Activated CD8-positive, alpha-beta T cell treated with anti-CD3 and anti-CD28 coated beads for 36 hours (primary cell): ENCODE measurements at regions of chr9 and their contacts with region 1.

Region 1: GRCh38 chr9:4574657-4575243 is 84.5 kb downstream of the SLC1A1 start:
- DNase-seq: peak; percentile 47
- ATAC-seq: peak; percentile 67
- H3K4me3 Mint-ChIP-seq: no peak overlapping the region
- H3K27ac Mint-ChIP-seq: peak overlapping the region; percentile 33
- H3K4me1 Mint-ChIP-seq: peaks cover 22% of the 10 kb centered on the region
- H3K27me3 Mint-ChIP-seq: no peaks in the 10 kb centered on the region
- CTCF ChIP-seq: no peak

Region 2: DNA sequence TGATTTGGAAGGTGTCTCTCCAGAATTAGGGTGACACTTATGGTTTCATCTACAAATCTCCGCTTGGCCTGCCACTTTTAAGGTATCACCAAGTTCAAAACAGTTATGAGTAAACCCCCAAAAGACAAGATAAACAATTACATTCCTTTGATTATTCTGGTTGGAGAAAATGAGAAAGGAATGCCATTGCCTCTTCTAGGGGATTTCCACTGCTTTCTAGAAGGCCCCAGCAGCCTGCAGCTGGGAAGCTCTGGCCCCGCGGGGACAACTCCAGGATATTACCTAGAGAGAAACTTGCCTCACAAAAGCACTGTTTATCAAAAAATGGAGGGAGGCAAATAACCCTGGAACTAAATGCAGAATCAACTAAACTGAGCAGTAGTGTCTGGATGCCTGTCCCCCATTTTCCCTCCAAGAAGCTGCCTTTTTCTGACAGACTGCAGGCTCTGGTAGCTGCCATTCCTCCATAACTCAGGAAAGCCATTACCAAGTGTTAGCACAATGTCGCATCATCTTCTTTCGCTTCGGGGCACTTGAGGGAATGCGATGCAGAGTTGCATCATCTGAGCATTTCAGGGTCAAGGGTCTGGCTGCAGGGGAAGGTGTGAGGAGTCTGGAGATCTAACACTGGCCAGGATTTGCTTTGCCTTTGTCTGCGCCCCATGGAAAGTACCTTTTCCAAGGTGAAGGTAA is 15.8 kb after region 1 on chr9:
- CTCF ChIA-PET with region 1: interaction called, 10 read pairs
- POLR2A ChIA-PET with region 1: interaction called, 3 read pairs
- intact Hi-C with region 1: no loop called
- DNase-seq: no peak
- ATAC-seq: no peak
- H3K4me3 Mint-ChIP-seq: no peak overlapping the region
- H3K27ac Mint-ChIP-seq: no peak overlapping the region
- H3K4me1 Mint-ChIP-seq: peaks cover 10% of the 10 kb centered on the region
- H3K27me3 Mint-ChIP-seq: no peaks in the 10 kb centered on the region
- CTCF ChIP-seq: no peak